GM12878 (cell line): ENCODE measurements at regions of chrX and their contacts with region 1.

Region 1: DNA sequence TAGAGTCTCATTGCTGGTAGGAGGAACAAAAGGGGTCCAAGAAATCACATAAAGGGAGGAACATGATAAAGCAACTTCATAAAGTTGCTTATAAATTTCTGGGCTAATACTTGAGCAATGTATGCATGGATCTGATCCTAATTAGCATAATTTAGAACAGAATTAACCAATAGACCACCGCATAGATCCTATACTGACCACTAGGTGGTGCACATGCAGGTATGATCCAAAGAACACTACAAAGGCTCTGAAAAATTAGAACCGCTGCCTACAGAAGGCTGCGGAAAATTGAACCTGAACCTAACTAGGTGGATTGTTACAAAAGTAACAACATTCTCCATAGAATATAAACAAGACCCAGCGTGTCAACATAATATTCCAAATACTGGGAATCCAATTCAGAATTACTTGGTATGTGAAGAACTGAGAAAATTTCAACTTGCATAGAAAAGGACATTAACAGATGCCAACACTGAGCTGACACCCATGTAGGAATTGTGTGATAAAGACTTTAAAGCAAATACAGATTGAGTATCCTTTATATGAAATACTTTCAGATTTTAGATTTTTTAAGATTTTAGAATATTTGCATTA is 23.3 kb downstream of the BRCC3 start:
- DNase-seq: no peak
- ATAC-seq: peak; percentile 82
- H3K4me3 ChIP-seq: no peak overlapping the region
- H3K27ac ChIP-seq: no peak overlapping the region
- H3K4me1 ChIP-seq: no peaks in the 10 kb centered on the region
- H3K27me3 ChIP-seq: no peaks in the 10 kb centered on the region
- CTCF ChIP-seq: peak; percentile 42 to 63 (median 54)
- EP300 ChIP-seq: no peak
- POLR2A ChIP-seq: no peak
- RAD21 ChIP-seq: peak; percentile 54

Region 2: DNA sequence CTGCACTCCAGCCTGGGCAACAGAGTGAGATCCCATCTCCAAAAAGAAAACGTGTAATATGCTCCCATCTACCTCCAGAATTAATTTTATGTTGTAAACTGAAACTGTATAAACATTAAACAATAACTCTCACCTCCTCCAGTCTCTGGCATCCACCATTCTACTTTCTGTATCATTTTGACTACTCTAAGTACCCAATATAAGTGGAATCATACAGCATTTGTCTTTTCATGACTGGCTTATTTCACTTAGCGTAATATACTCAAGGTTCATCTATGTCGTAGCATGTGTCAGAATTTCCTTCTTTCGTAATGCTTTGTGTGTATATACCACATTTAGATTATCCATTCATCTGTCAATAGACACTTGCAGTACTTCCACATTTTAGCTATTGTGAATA is 92.7 kb before region 1 on chrX:
- CTCF ChIA-PET with region 1: no interaction called
- POLR2A ChIA-PET with region 1: no interaction called
- RAD21 ChIA-PET with region 1: no interaction called
- SMC1A ChIA-PET with region 1: no interaction called
- in situ Hi-C with region 1: no loop called
- intact Hi-C with region 1: no loop called
- DNase-seq: no peak
- ATAC-seq: peak; percentile 54
- H3K4me3 ChIP-seq: no peak overlapping the region
- H3K27ac ChIP-seq: no peak overlapping the region
- H3K4me1 ChIP-seq: no peaks in the 10 kb centered on the region
- H3K27me3 ChIP-seq: no peaks in the 10 kb centered on the region
- CTCF ChIP-seq: no peak
- EP300 ChIP-seq: no peak
- POLR2A ChIP-seq: no peak
- RAD21 ChIP-seq: no peak

Region 3: DNA sequence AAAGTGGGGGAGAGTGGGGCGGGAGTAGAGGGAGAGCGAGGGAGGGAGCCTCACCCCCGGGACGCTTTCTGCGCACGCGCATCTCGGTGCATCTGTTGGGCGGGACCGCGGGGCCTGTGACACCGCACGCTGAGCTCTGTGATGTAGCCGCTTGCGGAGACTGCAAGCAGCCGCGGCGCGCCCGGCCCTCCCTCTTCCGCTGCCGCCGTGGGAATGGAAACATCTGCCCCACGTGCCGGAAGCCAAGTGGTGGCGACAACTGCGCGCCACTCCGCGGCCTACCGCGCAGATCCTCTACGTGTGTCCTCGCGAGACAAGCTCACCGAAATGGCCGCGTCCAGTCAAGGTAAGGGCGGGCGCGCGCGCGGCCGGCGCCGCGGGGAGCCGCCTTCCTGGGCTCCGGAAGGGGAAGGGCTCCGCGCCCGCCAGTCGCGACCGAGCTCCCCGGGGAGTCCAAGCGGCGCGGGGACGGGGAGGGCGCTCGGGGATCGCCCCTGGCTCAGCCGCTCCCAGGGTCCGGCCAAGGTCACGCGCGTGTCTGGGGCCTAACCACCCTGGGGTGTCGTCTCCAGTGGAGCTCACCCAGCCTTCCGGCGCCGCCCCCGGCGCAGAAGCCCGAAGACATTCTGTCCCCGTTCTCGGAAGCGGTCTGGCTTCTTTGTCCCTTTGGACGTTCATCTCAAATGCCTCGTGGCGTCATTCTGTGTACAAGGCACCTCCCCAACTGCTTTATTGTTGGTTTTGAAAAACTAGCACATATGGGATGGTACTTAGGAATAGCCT is 67.6 kb before region 1 on chrX and contains the start of gene FUNDC2:
- CTCF ChIA-PET with region 1: no interaction called
- POLR2A ChIA-PET with region 1: no interaction called
- RAD21 ChIA-PET with region 1: no interaction called
- SMC1A ChIA-PET with region 1: no interaction called
- in situ Hi-C with region 1: no loop called
- intact Hi-C with region 1: no loop called
- DNase-seq: peak; percentile 80
- ATAC-seq: peak; percentile 87
- H3K4me3 ChIP-seq: peak within 1 kb of the TSS; percentile 70
- H3K27ac ChIP-seq: peak within 1 kb of the TSS; percentile 94
- H3K4me1 ChIP-seq: no peaks in the 10 kb centered on the region
- H3K27me3 ChIP-seq: no peaks in the 10 kb centered on the region
- CTCF ChIP-seq: no peak
- EP300 ChIP-seq: no peak
- POLR2A ChIP-seq: peak; percentile 88
- RAD21 ChIP-seq: no peak
- polyA plus RNA-seq, gene FUNDC2: 232 to 285 TPM

Region 4: DNA sequence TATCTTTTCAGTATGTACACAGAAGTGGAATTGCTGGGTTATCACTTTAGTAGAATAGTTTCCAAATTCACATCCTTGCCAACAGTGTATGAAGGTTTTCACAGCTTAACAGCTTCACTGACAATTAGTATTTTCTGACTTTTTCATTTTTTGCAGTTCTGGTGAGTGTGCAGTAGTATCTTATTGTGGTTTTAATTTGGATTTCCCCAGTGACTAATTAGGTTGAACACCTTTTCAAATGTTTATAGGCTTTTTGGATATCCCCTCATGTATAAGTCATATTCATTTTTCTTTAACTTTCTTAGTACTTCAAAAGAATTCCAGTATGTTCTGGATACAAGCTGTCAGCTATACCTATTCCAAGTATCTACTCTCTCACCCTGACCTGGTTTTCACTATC is 13.9 kb after region 1 on chrX:
- CTCF ChIA-PET with region 1: interaction called, 18 read pairs
- POLR2A ChIA-PET with region 1: no interaction called
- RAD21 ChIA-PET with region 1: interaction called, 3 read pairs
- SMC1A ChIA-PET with region 1: interaction called, 4 read pairs
- in situ Hi-C with region 1: no loop called
- intact Hi-C with region 1: no loop called
- DNase-seq: no peak
- ATAC-seq: no peak
- H3K4me3 ChIP-seq: no peak overlapping the region
- H3K27ac ChIP-seq: no peak overlapping the region
- H3K4me1 ChIP-seq: no peaks in the 10 kb centered on the region
- H3K27me3 ChIP-seq: no peaks in the 10 kb centered on the region
- CTCF ChIP-seq: no peak
- EP300 ChIP-seq: no peak
- POLR2A ChIP-seq: no peak
- RAD21 ChIP-seq: no peak

Region 5: GRCh38 chrX:155134255-155134654 is 39.7 kb after region 1 on chrX:
- CTCF ChIA-PET with region 1: interaction called, 18 read pairs
- POLR2A ChIA-PET with region 1: no interaction called
- RAD21 ChIA-PET with region 1: no interaction called
- SMC1A ChIA-PET with region 1: no interaction called
- in situ Hi-C with region 1: no loop called
- intact Hi-C with region 1: no loop called
- DNase-seq: no peak
- ATAC-seq: no peak
- H3K4me3 ChIP-seq: no peak overlapping the region
- H3K27ac ChIP-seq: no peak overlapping the region
- H3K4me1 ChIP-seq: no peaks in the 10 kb centered on the region
- H3K27me3 ChIP-seq: no peaks in the 10 kb centered on the region
- CTCF ChIP-seq: no peak
- EP300 ChIP-seq: no peak
- POLR2A ChIP-seq: no peak
- RAD21 ChIP-seq: no peak

Region 6: DNA sequence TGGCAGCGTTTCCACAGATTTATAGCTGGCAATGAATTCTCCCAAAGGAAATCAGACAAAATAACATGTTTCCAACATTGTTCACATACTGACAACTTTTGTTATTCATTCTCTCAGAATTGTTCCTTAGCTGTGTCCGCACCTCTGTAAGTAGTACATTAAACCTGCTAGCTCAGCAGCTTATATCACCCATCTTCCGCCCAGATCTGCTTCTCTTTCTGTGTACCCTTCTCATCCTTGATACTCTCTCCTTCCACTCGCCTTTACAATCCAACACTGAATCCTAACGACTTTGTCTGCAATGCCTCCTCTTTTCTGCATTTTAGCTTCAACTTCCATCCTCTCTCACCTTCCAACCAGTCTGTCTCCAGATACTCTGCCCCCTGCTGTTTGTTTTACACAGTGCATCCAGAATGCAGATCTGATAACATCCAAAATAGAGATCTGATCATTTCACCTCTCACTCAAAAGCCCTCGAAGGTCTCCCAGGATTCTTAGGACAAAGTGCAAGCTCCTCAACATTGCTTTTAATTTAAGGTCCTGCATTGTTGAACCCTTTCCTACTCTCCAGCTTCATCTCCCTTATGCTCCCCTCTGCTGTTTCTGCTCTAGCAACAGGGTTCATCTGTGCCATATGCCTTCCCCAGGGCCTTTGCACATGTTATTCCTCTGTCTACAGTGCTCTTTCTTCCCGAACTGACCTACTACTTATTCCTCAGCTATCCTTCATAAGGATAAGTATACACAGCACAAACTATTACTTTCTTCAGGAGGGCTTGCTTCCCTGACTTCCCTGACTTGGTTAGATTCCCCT is 54.4 kb after region 1 on chrX:
- CTCF ChIA-PET with region 1: interaction called, 10 read pairs
- POLR2A ChIA-PET with region 1: no interaction called
- RAD21 ChIA-PET with region 1: no interaction called
- SMC1A ChIA-PET with region 1: no interaction called
- in situ Hi-C with region 1: no loop called
- intact Hi-C with region 1: no loop called
- DNase-seq: no peak
- ATAC-seq: peak; percentile 72
- H3K4me3 ChIP-seq: no peak overlapping the region
- H3K27ac ChIP-seq: no peak overlapping the region
- H3K4me1 ChIP-seq: no peaks in the 10 kb centered on the region
- H3K27me3 ChIP-seq: no peaks in the 10 kb centered on the region
- CTCF ChIP-seq: peak; percentile 39 to 54 (median 52); a peak in 5 of 6 replicates
- EP300 ChIP-seq: no peak
- POLR2A ChIP-seq: no peak
- RAD21 ChIP-seq: peak; percentile 41; the same call in 1 of the 2 replicates

Region 7: GRCh38 chrX:155819966-155820491 is 725.5 kb after region 1 on chrX:
- CTCF ChIA-PET with region 1: no interaction called
- POLR2A ChIA-PET with region 1: no interaction called
- RAD21 ChIA-PET with region 1: no interaction called
- SMC1A ChIA-PET with region 1: no interaction called
- in situ Hi-C with region 1: no loop called
- intact Hi-C with region 1: loop called (anchors 1 kb)
- DNase-seq: peak; percentile 11
- ATAC-seq: peak; percentile 83
- H3K4me3 ChIP-seq: no peak overlapping the region
- H3K27ac ChIP-seq: no peak overlapping the region
- H3K4me1 ChIP-seq: no peaks in the 10 kb centered on the region
- H3K27me3 ChIP-seq: no peaks in the 10 kb centered on the region
- CTCF ChIP-seq: peak; percentile 51 to 64 (median 51); a peak in 5 of 6 replicates
- EP300 ChIP-seq: no peak
- POLR2A ChIP-seq: no peak
- RAD21 ChIP-seq: peak; percentile 92